Thyroid gland (tissue), 4 donors: ENCODE measurements at regions of chr9 and their contacts with region 1.

Region 1: GRCh38 chr9:121997791-121998190 is 95.3 kb downstream of the TTLL11 start:
- DNase-seq: no peak
- H3K4me3 ChIP-seq: no peak overlapping the region
- H3K27ac ChIP-seq: no peak overlapping the region
- H3K4me1 ChIP-seq: peaks cover 0 to 9% of the 10 kb centered on the region in 2 donors
- H3K27me3 ChIP-seq: no peaks in the 10 kb centered on the region
- CTCF ChIP-seq: no peak
- POLR2A ChIP-seq: no peak

Region 2: GRCh38 chr9:121744687-121745395 is 252.9 kb before region 1 on chr9:
- intact Hi-C with region 1: loop called (anchors 5 kb)
- DNase-seq: peak; percentile 57 to 65
- H3K4me3 ChIP-seq: no peak overlapping the region
- H3K27ac ChIP-seq: peak overlapping the region; percentile 91 to 96 (median 93)
- H3K4me1 ChIP-seq: peaks cover 55 to 87% of the 10 kb centered on the region in 2 donors
- H3K27me3 ChIP-seq: no peaks in the 10 kb centered on the region
- CTCF ChIP-seq: no peak
- POLR2A ChIP-seq: no peak

Region 3: DNA sequence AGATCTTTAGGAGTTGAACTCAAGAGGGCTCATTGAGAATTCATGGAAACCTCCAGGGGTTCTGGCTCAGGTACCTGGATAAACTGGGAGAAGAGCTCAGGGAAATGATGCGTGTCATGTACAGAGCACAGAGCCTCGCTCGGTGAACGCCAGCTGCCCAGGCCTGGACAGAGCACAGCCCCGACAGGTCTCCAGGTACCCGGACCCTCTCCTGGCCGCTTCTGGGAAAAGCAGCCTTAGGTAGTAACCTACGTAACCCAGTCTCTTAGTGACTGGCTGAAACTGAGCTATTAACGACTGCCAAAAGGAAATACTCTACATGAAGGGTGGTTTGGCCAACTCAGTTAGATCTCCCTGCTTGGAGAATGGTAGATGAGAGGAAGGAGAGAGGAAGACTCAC is 62.1 kb before region 1 on chr9:
- intact Hi-C with region 1: no loop called
- DNase-seq: peak; percentile 79 to 80
- H3K4me3 ChIP-seq: no peak overlapping the region
- H3K27ac ChIP-seq: peak overlapping the region in 1 of 3 donors; percentile 51
- H3K4me1 ChIP-seq: peaks cover 5 to 16% of the 10 kb centered on the region in 2 donors
- H3K27me3 ChIP-seq: no peaks in the 10 kb centered on the region
- CTCF ChIP-seq: peak in 4 of 6 experiments; percentile 11 to 44 (median 31)
- POLR2A ChIP-seq: no peak

Region 4: DNA sequence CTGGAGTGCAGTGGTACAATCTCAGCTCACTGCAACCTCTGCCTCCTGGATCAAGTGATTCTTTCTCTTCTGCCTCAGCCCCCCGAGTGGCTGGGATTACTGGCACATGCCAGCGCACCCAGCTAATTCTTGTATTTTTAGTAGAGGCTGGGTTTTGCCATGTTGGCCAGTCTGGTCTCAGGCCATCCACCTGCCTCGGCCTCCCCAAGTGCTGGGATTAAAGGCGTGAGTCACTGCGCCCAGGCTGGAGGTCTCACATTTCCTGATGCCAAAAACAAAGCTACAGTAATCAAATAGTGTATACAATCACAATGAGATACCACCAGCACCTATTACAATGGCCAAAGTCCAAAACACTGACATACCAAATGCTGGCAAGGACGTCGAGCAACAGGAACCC is 44.3 kb after region 1 on chr9:
- intact Hi-C with region 1: no loop called
- DNase-seq: no peak
- H3K4me3 ChIP-seq: no peak overlapping the region
- H3K27ac ChIP-seq: no peak overlapping the region
- H3K4me1 ChIP-seq: no peaks in the 10 kb centered on the region
- H3K27me3 ChIP-seq: no peaks in the 10 kb centered on the region
- CTCF ChIP-seq: no peak
- POLR2A ChIP-seq: no peak